Activated CD4-positive, alpha-beta T cell treated with anti-CD3 and anti-CD28 coated beads for 36 hours (primary cell): ENCODE measurements at regions of chr10 and their contacts with region 1.

Region 1: GRCh38 chr10:75210282-75211006 is at the start of gene VDAC2:
- DNase-seq: peak; percentile 96
- ATAC-seq: peak; percentile 83
- H3K4me3 Mint-ChIP-seq: peak within 1 kb of the TSS; percentile 89
- H3K27ac Mint-ChIP-seq: peak within 1 kb of the TSS; percentile 100
- H3K4me1 Mint-ChIP-seq: peaks cover 40% of the 10 kb centered on the region
- H3K27me3 Mint-ChIP-seq: no peaks in the 10 kb centered on the region
- total RNA-seq, gene VDAC2: 122 to 233 TPM

Region 2: GRCh38 chr10:74176380-74177139 is 1033.9 kb before region 1 on chr10:
- CTCF ChIA-PET with region 1: no interaction called
- POLR2A ChIA-PET with region 1: interaction called, 3 read pairs
- intact Hi-C with region 1: loop called in 1 of 2 experiments (anchors 1 kb)
- DNase-seq: peak; percentile 98
- ATAC-seq: peak; percentile 94
- H3K4me3 Mint-ChIP-seq: peak overlapping the region; percentile 89
- H3K27ac Mint-ChIP-seq: peak overlapping the region; percentile 95
- H3K4me1 Mint-ChIP-seq: peaks cover 37% of the 10 kb centered on the region
- H3K27me3 Mint-ChIP-seq: no peaks in the 10 kb centered on the region

Region 3: DNA sequence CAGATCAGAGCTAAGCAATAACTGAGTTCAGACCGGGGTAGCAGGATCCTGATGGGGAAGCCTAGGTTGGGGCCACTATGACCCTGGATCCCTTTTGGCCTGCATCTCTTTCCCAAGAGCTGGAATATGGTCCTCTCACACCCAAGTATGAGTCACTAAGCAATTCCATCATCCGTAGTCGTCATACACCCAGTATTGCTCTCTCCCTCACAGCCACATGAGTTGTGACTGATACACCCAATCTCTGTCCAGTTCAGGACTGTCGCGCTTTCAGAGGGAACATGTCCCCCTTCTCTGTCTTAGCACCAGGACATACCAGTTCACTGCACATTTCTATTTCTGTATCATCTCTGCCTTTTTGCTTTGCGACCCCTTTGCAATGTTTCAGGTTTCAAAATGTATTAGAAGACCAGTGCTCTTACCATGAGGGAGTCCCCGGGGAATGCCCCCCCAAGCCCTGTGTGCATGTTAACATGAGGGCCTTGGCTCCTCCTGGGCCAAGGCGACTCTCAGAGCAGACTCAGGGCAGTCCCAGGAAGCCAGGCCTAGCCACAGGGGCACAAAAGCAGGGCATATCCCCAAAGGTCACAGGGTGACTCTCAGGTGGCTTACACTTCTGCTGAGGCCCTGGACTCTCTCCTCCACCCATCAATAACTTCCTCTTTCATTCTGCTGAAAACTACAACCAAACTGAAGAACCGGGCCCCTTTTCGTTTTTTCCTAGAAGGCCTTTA is 174.3 kb before region 1 on chr10:
- CTCF ChIA-PET with region 1: no interaction called
- POLR2A ChIA-PET with region 1: no interaction called
- intact Hi-C with region 1: no loop called
- DNase-seq: peak; percentile 55
- ATAC-seq: peak; percentile 43
- H3K4me3 Mint-ChIP-seq: no peak overlapping the region
- H3K27ac Mint-ChIP-seq: peak overlapping the region; percentile 82
- H3K4me1 Mint-ChIP-seq: peaks cover 64% of the 10 kb centered on the region
- H3K27me3 Mint-ChIP-seq: no peaks in the 10 kb centered on the region

Region 4: DNA sequence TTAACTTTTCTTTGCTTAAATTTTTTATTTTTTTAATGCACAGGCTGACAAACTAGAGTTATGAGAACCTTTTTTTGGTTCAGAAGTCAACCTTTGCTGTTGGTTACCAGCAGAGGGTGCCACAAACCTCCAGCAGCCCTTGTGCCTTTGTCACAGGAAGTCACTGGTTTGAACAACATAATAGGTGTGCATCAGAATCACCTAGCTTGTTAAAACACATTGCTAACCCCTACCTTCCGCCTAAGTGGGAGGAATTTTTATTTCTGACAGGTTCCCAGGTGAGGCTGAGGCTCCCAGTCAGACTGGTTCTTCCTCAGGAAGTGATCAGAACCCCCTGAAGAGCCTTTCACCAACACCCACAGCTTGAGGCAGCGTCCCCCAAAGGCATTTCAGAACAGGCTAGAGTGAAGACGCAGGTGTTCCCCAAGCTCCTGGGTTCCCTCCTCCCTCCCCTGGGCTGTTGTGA is 22.4 kb before region 1 on chr10:
- CTCF ChIA-PET with region 1: interaction called, 19 read pairs
- POLR2A ChIA-PET with region 1: interaction called, 4 read pairs
- intact Hi-C with region 1: loop called (anchors 1 to 2 kb)
- DNase-seq: peak; percentile 81
- ATAC-seq: peak; percentile 91
- H3K4me3 Mint-ChIP-seq: no peak overlapping the region
- H3K27ac Mint-ChIP-seq: peak overlapping the region; percentile 72
- H3K4me1 Mint-ChIP-seq: peaks cover 10% of the 10 kb centered on the region
- H3K27me3 Mint-ChIP-seq: no peaks in the 10 kb centered on the region

Region 5: DNA sequence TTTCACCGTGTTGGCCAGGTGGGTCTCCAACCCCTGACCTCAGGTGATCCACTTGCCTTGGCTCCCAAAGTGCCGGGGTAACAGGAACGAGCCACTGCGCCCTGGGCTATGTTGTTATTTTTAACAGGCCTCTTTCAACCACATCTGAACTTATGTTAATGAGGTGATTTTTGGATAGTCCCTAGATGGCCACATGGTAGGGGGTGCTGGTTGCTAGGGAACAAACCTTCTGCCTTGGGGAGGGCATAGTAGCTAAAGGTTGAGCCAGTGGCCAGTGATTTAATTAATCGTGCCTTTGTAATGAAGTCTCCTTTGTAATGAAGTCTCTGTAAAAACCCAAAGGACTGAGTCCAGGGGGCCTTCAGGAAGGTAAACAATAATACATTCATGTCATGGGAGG is 16.2 kb after region 1 on chr10:
- CTCF ChIA-PET with region 1: interaction called, 129 read pairs
- POLR2A ChIA-PET with region 1: interaction called, 18 read pairs
- intact Hi-C with region 1: loop called (anchors 1 kb)
- DNase-seq: no peak
- ATAC-seq: no peak
- H3K4me3 Mint-ChIP-seq: no peak overlapping the region
- H3K27ac Mint-ChIP-seq: peak overlapping the region; percentile 70
- H3K4me1 Mint-ChIP-seq: peaks cover 59% of the 10 kb centered on the region
- H3K27me3 Mint-ChIP-seq: no peaks in the 10 kb centered on the region

Region 6: DNA sequence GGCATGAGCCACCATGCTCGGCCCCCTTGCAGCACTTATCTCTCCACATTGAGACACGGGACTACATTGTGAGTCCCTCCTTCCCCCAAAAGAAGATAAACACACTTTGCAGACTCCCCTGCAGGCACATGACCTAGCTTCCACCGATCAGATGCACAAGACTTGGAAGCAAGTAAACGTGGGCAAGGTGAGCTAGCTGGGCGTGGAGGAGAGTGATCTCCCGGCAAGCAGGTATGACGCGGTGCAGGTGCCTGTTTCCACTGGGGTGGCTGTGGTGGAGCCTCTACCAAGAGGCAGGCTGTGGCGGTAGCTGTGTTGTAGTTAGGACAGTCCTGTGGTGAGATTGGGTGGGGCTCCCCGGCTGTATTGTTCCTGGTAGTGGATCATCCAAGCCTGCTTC is 33.0 kb after region 1 on chr10:
- CTCF ChIA-PET with region 1: no interaction called
- POLR2A ChIA-PET with region 1: no interaction called
- intact Hi-C with region 1: no loop called
- DNase-seq: no peak
- ATAC-seq: no peak
- H3K4me3 Mint-ChIP-seq: no peak overlapping the region
- H3K27ac Mint-ChIP-seq: no peak overlapping the region
- H3K4me1 Mint-ChIP-seq: no peaks in the 10 kb centered on the region
- H3K27me3 Mint-ChIP-seq: no peaks in the 10 kb centered on the region

Region 7: DNA sequence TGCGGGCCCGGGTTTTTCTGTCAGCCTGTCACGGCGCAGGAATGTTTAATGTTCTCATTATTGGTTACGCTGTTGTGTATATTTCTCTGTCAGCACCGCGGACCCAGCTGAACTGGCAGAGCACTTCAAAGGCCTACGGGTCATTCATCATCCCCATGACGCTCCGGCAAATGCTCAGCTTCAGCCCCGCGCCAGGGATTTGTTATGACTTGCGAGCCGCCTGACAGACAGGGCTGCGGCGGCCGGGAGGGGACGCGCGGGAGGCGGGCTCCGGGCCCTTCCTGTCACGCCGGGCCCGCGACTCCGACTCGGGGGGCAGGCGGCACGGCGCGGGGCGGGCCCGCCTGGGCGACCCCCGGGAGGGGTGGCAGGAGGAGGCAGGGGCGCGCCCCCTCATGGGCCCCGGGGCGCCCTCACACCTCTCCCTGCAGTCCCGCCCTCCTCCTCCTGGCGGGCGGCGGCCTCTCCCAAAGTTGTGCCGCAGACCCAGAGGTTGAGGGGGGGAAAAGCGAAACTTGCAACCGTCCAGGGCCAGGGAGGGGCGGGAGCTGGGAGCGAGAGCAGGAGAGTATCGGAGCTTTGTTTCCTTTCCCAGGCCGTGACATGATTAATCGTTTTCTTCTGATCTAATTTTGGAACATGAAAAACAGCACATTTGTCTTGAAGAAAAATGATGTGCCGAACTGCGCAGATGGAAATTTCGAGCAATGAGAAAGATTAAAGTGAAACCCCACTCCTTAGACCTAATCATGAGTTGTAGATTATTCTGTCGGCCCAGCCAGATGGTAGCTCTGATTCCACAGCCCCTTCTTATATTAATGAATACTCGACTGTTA is 84.6 kb after region 1 on chr10:
- CTCF ChIA-PET with region 1: interaction called, 3 read pairs
- POLR2A ChIA-PET with region 1: no interaction called
- intact Hi-C with region 1: loop called in 1 of 2 experiments (anchors 1 kb)
- DNase-seq: peak; percentile 91
- ATAC-seq: peak; percentile 96
- H3K4me3 Mint-ChIP-seq: peak overlapping the region; percentile 47
- H3K27ac Mint-ChIP-seq: no peak overlapping the region
- H3K4me1 Mint-ChIP-seq: peaks cover 5% of the 10 kb centered on the region
- H3K27me3 Mint-ChIP-seq: peaks cover 10% of the 10 kb centered on the region

Region 8: DNA sequence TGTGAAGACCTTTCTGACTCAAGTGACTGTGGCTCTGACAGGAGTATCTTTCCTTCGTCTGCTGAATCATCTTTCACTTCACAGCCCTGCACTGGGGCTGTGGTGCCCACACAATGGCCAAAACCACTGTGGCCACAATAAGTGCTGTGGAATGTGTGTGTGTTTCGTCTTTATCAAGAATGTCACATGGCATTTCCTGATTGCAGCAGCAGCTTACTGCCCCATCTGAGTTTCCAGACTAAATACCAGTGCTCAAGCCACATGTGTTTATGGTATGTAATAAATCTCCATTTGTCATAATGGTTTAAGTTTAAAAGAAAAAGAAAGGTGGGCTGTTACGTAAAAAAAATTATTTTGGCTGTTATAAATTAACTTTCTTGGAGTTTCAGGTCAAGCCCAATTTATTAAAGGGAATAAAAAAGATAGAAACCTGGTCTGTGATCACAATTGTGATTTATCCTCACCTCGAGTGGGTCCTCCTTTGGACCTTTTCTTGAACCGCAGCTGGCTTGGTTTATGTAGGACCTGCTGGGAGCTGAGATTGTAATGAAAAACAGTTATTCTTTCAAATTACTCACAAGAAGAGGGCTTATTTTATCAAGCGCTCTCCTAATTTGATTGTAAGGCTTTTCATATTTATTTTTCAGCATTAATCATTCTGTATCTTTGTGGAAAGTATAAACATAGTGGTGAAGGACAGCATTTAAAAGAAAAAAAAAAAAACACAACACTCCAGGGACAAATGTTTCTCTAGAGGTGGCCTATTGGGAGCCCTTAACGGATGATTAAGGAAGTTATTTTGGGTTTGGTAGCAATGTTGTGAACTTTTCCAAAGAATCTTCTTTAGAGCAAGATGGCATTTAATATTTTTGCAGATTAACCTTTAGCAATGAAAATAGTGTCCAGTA is 337.2 kb after region 1 on chr10:
- CTCF ChIA-PET with region 1: no interaction called
- POLR2A ChIA-PET with region 1: no interaction called
- intact Hi-C with region 1: no loop called
- DNase-seq: no peak
- ATAC-seq: no peak
- H3K4me3 Mint-ChIP-seq: no peak overlapping the region
- H3K27ac Mint-ChIP-seq: no peak overlapping the region
- H3K4me1 Mint-ChIP-seq: no peaks in the 10 kb centered on the region
- H3K27me3 Mint-ChIP-seq: peaks cover 7% of the 10 kb centered on the region